Activated CD4-positive, alpha-beta T cell treated with anti-CD3 and anti-CD28 coated beads for 36 hours (primary cell): ENCODE measurements at regions of chr1 and their contacts with region 1.

Region 1: DNA sequence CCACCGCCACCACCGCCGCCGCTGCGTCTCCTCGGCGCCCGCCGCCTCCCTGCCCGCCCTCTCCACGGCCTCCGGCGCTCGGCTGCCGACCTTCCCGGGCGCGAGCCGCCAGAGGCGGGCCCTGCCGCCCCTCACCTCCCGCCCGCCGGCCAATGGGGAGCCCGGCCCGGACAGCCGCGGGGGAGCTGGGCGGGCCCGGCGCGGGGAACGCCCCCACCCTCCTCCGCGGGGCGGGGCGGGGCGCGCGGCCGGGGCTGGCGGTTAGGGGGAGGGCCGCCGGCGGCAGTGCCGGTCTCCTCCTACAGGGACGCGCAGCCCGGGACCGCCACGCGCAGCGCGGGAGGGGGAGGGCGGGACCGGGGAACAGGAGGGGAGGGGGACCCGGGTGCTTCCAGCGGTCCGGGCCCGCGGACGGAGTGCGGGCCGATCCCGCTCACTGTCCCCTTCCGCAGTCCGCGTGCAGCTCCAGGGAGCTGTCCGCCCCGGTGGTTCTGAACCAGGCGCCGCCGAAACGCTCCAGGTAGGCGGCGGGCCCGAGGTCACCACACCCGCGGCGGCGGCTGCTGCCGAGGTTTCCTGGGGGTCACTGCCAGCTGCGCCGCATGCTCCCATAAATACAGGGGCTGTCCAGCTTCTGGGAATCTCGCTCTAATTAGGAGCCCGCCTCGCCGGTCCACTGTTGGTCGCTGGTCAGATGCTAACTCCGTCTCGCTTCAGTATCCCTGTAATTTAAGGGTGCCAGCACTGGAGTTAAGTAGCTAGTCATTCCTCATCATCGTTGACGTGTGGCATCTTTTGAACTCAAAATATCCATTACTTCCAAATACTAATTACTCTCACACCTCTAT is at the start of gene PGBD5:
- DNase-seq: peak; percentile 82
- ATAC-seq: peak; percentile 89
- H3K4me3 Mint-ChIP-seq: peak within 1 kb of the TSS; percentile 60
- H3K27ac Mint-ChIP-seq: no peak within 1 kb of the TSS
- H3K4me1 Mint-ChIP-seq: peaks cover 7% of the 10 kb centered on the region
- H3K27me3 Mint-ChIP-seq: peaks cover 57% of the 10 kb centered on the region
- total RNA-seq, gene PGBD5: 0.11 TPM in 1 of 2 experiments, not detected in the other

Region 2: GRCh38 chr1:229430761-229431283 is 995.6 kb before region 1 on chr1:
- CTCF ChIA-PET with region 1: no interaction called
- POLR2A ChIA-PET with region 1: no interaction called
- intact Hi-C with region 1: loop called in 1 of 2 experiments (anchors 10 kb)
- DNase-seq: peak; percentile 73
- ATAC-seq: peak; percentile 62
- H3K4me3 Mint-ChIP-seq: peak overlapping the region; percentile 53
- H3K27ac Mint-ChIP-seq: no peak overlapping the region
- H3K4me1 Mint-ChIP-seq: peaks cover 19% of the 10 kb centered on the region
- H3K27me3 Mint-ChIP-seq: peaks cover 70% of the 10 kb centered on the region

Region 3: DNA sequence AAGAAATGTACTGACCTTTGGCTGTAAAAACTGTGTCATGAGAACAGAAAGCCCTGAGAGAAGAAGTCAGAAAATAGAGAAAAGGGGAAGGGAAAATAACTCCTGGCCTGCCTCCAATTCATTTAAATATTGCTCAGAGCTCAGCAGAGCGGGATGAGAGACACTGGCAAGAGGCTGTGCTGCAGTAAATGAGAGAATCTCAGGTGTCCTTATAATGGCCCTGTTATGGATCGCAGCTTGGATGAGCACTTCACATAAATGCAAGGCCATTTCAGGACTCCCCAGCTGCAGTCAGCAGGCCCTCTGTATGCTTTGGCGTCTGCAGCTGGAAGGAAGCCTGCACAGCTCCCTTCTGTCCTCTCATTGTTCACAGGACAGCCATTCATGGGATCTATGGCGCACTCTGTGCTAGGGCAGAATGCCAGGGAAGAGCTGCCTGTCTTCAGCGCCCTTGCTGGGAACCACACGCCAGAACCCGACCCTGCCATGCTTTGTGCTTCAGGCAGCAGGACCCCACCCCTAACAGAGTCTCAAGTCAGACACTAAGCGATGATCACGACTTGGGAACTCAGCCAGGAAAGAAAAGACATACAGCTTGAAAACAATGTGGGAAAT is 847.3 kb before region 1 on chr1:
- CTCF ChIA-PET with region 1: no interaction called
- POLR2A ChIA-PET with region 1: no interaction called
- intact Hi-C with region 1: no loop called
- DNase-seq: no peak
- ATAC-seq: no peak
- H3K4me3 Mint-ChIP-seq: no peak overlapping the region
- H3K27ac Mint-ChIP-seq: no peak overlapping the region
- H3K4me1 Mint-ChIP-seq: no peaks in the 10 kb centered on the region
- H3K27me3 Mint-ChIP-seq: peaks cover 5% of the 10 kb centered on the region

Region 4: GRCh38 chr1:230401763-230402294 is 24.6 kb before region 1 on chr1:
- CTCF ChIA-PET with region 1: no interaction called
- POLR2A ChIA-PET with region 1: no interaction called
- intact Hi-C with region 1: no loop called
- DNase-seq: no peak
- ATAC-seq: no peak
- H3K4me3 Mint-ChIP-seq: no peak overlapping the region
- H3K27ac Mint-ChIP-seq: no peak overlapping the region
- H3K4me1 Mint-ChIP-seq: no peaks in the 10 kb centered on the region
- H3K27me3 Mint-ChIP-seq: peaks cover 11% of the 10 kb centered on the region

Region 5: GRCh38 chr1:230867903-230868735 is 441.6 kb after region 1 on chr1 and contains the start of gene C1orf198:
- CTCF ChIA-PET with region 1: no interaction called
- POLR2A ChIA-PET with region 1: no interaction called
- intact Hi-C with region 1: loop called in 1 of 2 experiments (anchors 1 kb)
- DNase-seq: peak; percentile 86
- ATAC-seq: peak; percentile 90
- H3K4me3 Mint-ChIP-seq: peak within 1 kb of the TSS; percentile 80
- H3K27ac Mint-ChIP-seq: peak within 1 kb of the TSS; percentile 21
- H3K4me1 Mint-ChIP-seq: peaks cover 22% of the 10 kb centered on the region
- H3K27me3 Mint-ChIP-seq: peaks cover 14% of the 10 kb centered on the region
- total RNA-seq, gene C1orf198: 5.8 to 6.9 TPM

Region 6: GRCh38 chr1:231162297-231162969 is 736.0 kb after region 1 on chr1:
- CTCF ChIA-PET with region 1: no interaction called
- POLR2A ChIA-PET with region 1: no interaction called
- intact Hi-C with region 1: loop called in 1 of 2 experiments (anchors 1 kb)
- DNase-seq: peak; percentile 60
- ATAC-seq: peak; percentile 57
- H3K4me3 Mint-ChIP-seq: no peak overlapping the region
- H3K27ac Mint-ChIP-seq: no peak overlapping the region
- H3K4me1 Mint-ChIP-seq: peaks cover 6% of the 10 kb centered on the region
- H3K27me3 Mint-ChIP-seq: peaks cover 57% of the 10 kb centered on the region

Region 7: DNA sequence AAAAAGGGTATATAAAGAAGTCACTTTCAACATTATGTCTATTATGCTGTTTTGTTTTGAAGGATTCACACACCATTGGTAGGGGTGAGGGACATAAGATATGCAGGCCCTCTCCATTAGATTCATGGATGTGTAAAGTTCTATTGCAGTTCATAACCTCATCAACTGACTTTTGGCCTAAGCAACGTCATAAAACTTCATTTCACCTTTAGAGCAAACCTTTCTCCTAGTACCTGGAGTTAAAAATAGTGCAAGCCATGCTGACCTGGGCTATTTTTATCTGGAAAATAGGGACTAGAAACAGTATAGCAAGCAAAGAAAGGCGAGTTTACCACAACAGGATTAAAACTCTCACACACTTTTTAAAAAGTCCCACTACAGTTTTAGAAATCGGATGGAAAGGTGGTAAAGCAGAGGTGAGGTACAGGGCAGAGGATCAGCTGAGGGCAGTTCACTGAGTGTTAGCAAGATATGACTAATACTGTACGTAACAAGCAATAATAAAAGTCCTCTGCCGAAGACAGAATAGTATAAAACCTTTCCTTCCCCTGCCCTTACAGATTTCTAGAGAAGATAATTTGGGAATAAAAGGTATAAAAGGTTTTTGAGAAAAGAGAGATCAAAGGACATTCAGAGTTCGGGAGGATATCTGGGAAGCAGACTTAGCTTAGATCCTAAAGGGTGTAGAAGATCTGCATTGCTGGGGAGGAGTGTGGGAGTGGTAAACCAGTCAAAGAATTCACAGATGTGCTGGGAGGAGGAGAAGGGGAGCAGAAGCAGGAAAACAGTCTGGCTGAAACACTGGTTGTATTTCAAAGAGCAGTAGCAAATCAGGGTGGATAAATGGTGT is 981.3 kb after region 1 on chr1:
- CTCF ChIA-PET with region 1: no interaction called
- POLR2A ChIA-PET with region 1: no interaction called
- intact Hi-C with region 1: no loop called
- DNase-seq: no peak
- ATAC-seq: peak; percentile 72
- H3K4me3 Mint-ChIP-seq: no peak overlapping the region
- H3K27ac Mint-ChIP-seq: no peak overlapping the region
- H3K4me1 Mint-ChIP-seq: peaks cover 19% of the 10 kb centered on the region
- H3K27me3 Mint-ChIP-seq: no peaks in the 10 kb centered on the region